Right ventricle myocardium inferior (tissue), 1 donor: ENCODE measurements at regions of chr2 and their contacts with region 1.

Region 1: DNA sequence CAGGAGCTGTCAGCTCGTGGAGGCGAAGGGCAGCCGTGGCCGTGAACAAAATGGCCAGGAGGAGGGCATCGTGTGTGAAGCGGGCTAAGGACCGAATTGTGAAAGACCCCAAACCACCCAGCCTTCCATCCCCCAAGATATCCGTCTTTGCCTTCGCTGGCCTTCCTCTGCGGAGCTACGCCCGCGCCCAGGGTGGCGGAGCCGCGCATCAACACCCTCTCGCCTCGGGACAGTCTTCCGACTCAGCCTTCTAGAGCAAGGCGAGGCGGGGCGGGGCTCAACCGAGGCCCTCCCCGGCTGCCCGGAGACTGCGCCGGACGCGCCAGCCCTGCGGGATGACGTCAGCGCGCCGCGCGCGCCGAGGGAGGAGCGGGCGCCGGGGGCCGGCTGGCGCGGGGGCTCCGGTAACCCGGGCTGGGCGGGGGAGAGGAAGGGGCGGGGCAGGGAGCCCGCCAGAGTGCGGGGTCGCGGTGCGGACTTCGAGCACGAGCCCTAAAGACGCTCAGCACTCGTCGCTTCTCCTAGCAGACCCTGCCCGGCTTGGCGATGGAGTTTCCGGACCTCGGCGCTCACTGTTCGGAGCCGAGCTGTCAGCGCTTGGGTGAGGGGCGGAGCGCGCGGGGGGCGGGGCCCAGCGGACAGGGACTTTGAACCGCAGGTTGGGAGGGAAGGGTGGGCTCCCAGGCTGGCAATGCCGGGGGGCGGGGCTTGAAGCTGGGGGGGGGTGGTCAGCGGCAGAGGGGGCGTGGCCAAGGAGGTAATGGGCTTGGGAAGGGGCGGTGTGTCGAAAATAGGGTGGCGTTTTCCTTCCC is at the start of gene ZFAND2B:
- DNase-seq: peak; percentile 98
- ATAC-seq: peak; percentile 98
- total RNA-seq, gene ZFAND2B: 24.3 TPM

Region 2: GRCh38 chr2:219229305-219230058 is 22.8 kb after region 1 on chr2 and contains the starts of genes ANKZF1 and ATG9A:
- intact Hi-C with region 1: loop called (anchors 2 kb)
- DNase-seq: peak; percentile 99
- ATAC-seq: peak; percentile 99
- total RNA-seq, gene ANKZF1: 26.6 TPM
- total RNA-seq, gene ATG9A: 79.4 TPM